ENCODE measurements at regions of chr9 and their contacts with region 1.

Region 1: DNA sequence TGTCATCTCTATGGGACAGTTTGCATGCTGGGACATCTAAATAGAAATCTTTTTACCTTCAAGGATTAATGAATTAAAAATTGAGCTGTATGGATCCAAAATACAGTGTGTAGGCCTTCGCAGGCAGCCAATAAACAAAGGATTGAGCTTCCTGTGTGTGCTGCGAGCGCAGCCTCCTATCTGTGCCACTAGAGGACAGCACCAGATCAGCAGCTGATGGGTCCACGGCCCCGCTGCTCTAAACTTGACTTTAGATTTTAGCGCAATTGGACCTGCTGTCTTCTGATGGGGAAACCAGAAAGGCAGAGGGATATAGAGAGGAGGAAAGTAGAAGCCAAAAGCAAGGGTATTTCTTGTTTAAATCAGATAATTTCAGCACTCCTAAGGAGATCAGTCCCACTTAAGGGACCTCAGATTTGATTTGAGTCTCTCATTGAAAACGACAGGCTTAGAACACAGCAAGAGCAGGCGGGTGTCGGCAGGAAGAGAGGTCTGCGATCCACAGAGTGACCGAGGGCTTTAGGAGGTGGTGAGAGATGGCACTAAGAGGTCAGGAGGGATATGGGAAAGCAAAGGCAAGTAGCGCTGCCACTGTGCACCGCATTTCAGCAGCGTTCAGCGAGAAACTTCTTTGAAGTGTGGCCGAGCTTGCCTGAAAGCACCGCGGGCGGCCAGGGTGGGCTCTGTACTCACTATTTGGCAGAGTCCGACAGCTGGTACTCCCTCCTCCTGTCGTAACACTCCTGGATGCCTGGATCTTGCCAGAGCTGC is 214.3 kb downstream of the GNA14 start:
- DNase-seq: peak; percentile 25
- H3K4me3 Mint-ChIP-seq: no peak overlapping the region
- H3K27ac Mint-ChIP-seq: no peak overlapping the region
- H3K4me1 Mint-ChIP-seq: peaks cover 4% of the 10 kb centered on the region
- H3K27me3 Mint-ChIP-seq: peaks cover 4% of the 10 kb centered on the region

Region 2: GRCh38 chr9:77495834-77496671 is 62.2 kb after region 1 on chr9:
- intact Hi-C with region 1: loop called (anchors 10 kb)
- DNase-seq: no peak
- H3K4me3 Mint-ChIP-seq: no peak overlapping the region
- H3K27ac Mint-ChIP-seq: no peak overlapping the region
- H3K4me1 Mint-ChIP-seq: no peaks in the 10 kb centered on the region
- H3K27me3 Mint-ChIP-seq: peaks cover 14% of the 10 kb centered on the region

Region 3: DNA sequence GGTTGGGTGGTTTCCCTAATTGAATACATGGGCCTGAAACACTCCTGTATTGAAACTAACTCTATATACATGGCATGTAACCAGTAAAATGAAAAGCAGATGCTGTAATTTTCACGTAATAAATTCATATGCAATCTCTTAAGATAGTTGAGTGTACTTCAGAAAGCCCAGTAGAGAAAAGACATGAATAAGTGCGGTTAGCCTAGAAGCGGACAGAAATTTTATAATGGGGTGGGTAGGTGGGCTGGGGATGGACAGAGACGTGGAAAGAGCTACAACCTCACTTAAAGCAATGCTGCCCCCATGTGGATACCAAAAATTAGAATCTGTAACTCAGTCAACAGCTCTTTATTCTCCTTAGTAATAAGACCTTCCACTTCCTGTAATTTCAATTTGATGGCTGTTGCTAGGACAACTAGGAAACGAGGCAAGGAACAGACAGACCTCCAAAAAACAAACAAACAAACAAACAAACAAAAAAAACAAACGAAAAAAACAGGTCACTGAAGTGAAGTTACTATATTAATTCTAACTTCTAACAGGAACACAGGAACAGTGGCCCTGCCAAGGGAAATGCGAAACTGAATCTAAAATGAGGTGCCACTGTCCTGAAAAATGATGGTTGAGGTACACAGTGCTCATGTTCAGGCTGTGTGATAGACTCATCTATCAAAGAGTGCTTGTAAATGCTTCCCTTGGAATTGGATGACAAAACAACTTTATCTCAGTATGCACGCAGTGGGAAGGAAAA is 317.7 kb after region 1 on chr9:
- intact Hi-C with region 1: loop called (anchors 2 kb)
- DNase-seq: no peak
- H3K4me3 Mint-ChIP-seq: no peak overlapping the region
- H3K27ac Mint-ChIP-seq: peak overlapping the region; percentile 75
- H3K4me1 Mint-ChIP-seq: peaks cover 22% of the 10 kb centered on the region
- H3K27me3 Mint-ChIP-seq: no peaks in the 10 kb centered on the region